Transverse colon (tissue), 4 donors: ENCODE measurements at regions of chr4 and their contacts with region 1.

Region 1: DNA sequence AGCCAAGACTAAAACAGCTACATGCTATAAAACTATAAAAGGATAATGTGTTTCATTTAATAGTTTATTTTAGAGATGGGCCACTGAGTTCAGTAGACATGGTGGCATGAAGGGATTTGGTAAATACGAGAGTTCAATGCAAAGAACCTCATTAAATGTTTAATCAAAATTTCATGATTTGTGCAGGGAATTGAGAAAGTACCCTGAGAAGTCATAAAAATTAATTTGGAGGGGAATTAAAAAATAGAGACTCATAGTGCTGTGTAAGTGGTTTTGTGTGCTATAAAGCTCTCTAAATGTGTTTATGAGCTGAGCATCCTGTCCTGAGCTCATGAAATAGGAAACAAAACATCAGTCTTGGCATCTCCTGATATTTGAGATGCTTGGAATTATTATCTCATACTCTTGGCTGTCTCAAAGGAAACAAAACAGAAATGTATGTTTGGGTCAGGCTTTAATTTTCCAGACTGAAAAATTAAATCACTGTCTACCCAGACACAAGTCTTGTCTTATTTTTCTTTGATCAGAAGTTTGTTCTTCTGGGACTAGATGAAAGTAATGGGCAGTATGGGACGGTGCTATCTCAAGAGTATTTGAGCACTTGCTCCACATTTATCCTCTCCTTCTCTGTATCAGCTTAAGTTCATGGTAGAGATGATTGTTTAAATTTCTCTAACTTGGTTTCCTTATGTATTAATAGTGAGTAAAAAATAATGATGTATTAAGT is 38.0 kb upstream of the EMCN start:
- DNase-seq: no peak
- H3K4me3 ChIP-seq: no peak overlapping the region
- H3K27ac ChIP-seq: no peak overlapping the region
- H3K4me1 ChIP-seq: no peaks in the 10 kb centered on the region
- H3K27me3 ChIP-seq: no peaks in the 10 kb centered on the region
- CTCF ChIP-seq: no peak
- EP300 ChIP-seq: no peak
- POLR2A ChIP-seq: no peak

Region 2: GRCh38 chr4:100695039-100695654 is 139.4 kb after region 1 on chr4:
- in situ Hi-C with region 1: no loop called
- intact Hi-C with region 1: no loop called
- DNase-seq: no peak
- H3K4me3 ChIP-seq: no peak overlapping the region
- H3K27ac ChIP-seq: no peak overlapping the region
- H3K4me1 ChIP-seq: no peaks in the 10 kb centered on the region
- H3K27me3 ChIP-seq: no peaks in the 10 kb centered on the region
- CTCF ChIP-seq: no peak
- EP300 ChIP-seq: no peak
- POLR2A ChIP-seq: no peak

Region 3: GRCh38 chr4:102390438-102390837 is 1834.7 kb after region 1 on chr4:
- in situ Hi-C with region 1: no loop called
- intact Hi-C with region 1: loop called (anchors 10 kb)
- DNase-seq: no peak
- H3K4me3 ChIP-seq: no peak overlapping the region
- H3K27ac ChIP-seq: no peak overlapping the region
- H3K4me1 ChIP-seq: no peaks in the 10 kb centered on the region
- H3K27me3 ChIP-seq: no peaks in the 10 kb centered on the region
- CTCF ChIP-seq: no peak
- EP300 ChIP-seq: no peak
- POLR2A ChIP-seq: no peak